Panc1 (cell line): ENCODE measurements at regions of chr3 and their contacts with region 1.

Region 1: GRCh38 chr3:124351430-124352148 is 359.7 kb upstream of the ROPN1 start:
- DNase-seq: peak; percentile 17
- ATAC-seq: peak; percentile 79
- H3K4me3 ChIP-seq: no peak overlapping the region
- H3K27ac ChIP-seq: no peak overlapping the region
- H3K4me1 ChIP-seq: no peaks in the 10 kb centered on the region
- H3K27me3 ChIP-seq: peaks cover 9% of the 10 kb centered on the region
- CTCF ChIP-seq: peak; percentile 73

Region 2: DNA sequence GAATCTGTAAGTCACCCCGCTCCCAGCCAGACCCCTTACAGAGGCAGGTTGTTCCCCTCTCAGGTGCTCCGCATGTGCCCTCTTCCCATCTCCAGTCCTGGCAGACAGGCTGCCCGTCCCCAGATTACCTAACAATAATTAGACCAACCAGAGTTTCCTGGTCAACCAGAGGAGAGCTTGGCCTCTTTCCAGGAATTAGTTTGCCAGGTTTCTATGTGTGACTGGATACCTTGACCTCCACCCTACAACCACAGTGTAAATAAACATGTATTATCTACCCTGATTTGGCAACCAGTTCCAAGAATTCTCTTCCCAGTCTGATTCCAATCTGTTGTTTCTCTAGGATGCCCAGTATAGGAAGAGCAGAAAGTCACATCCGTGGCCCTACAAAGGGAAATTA is 200.7 kb after region 1 on chr3:
- CTCF ChIA-PET with region 1: interaction called, 3 read pairs
- POLR2A ChIA-PET with region 1: no interaction called
- in situ Hi-C with region 1: no loop called
- intact Hi-C with region 1: loop called (anchors 2 kb)
- DNase-seq: no peak
- ATAC-seq: no peak
- H3K4me3 ChIP-seq: no peak overlapping the region
- H3K27ac ChIP-seq: no peak overlapping the region
- H3K4me1 ChIP-seq: no peaks in the 10 kb centered on the region
- H3K27me3 ChIP-seq: peaks cover 35% of the 10 kb centered on the region
- CTCF ChIP-seq: no peak